ENCODE measurements at regions of chr5 and their contacts with region 1.

Region 1: DNA sequence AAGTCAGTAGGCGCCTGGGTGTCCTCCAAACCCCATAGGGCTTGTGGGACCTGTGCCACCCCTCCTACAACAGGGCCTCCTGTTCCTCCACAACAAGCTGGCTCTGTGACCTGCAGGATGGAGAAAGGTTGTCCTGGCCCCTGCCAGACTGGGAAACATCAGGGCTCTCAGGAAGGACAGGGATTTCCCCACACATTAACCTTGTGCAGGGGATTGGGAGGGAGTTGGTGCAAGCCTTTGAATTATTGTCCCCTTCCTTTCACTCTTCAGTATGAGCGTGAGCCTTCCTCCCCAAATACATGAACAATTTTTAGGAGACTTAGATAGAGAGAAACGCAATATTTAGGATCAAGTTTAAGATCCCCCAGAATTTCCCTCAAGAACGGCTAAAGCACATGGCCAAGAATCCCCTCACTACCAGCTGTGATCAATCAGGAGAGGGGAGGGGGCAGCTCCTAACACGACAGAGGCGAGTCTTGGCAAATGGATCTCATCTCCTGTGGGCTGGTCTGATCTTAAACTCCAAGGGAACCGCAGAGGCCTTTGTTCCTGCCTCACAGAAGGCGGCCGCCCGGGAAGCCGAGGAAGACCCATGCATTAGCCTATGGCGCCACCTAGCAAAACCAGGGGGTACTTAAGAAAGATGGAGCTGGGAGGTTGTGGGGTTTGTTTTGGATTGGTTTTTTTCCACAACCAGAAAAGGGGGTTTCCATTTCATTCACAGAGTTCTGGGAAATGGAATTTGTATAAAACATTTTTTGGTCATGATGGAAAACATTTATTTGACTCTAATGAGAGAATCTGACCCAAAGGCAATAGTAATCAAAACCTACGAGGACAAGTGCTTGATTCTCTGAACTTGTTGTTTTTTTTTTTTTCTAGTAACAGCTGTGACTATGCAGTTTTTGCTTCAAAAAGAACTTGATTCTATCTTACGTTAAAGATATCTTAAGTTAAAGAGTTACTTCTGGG is 36.1 kb upstream of the OSMR start:
- DNase-seq: peak; percentile 83 to 87 (median 86)
- ATAC-seq: peak; percentile 98
- H3K4me3 ChIP-seq: no peak overlapping the region
- H3K27ac ChIP-seq: no peak overlapping the region
- H3K4me1 ChIP-seq: peaks cover 2 to 7% of the 10 kb centered on the region in 2 experiments; a peak in 3 of 5 replicates
- H3K27me3 ChIP-seq: no peaks in the 10 kb centered on the region
- CTCF ChIP-seq: peak; percentile 94 to 98 (median 95)
- EP300 ChIP-seq: no peak
- POLR2A ChIP-seq: no peak
- RAD21 ChIP-seq: peak; percentile 97 to 98

Region 2: GRCh38 chr5:38208782-38209378 is 600.8 kb before region 1 on chr5:
- CTCF ChIA-PET with region 1: interaction called, 6 read pairs
- POLR2A ChIA-PET with region 1: no interaction called
- in situ Hi-C with region 1: no loop called
- intact Hi-C with region 1: loop called (anchors 1 kb)
- DNase-seq: peak; percentile 34 to 69 (median 41)
- ATAC-seq: peak; percentile 86
- H3K4me3 ChIP-seq: no peak overlapping the region
- H3K27ac ChIP-seq: no peak overlapping the region
- H3K4me1 ChIP-seq: no peaks in the 10 kb centered on the region
- H3K27me3 ChIP-seq: no peaks in the 10 kb centered on the region
- CTCF ChIP-seq: peak; percentile 64 to 83 (median 70)
- EP300 ChIP-seq: no peak
- POLR2A ChIP-seq: no peak
- RAD21 ChIP-seq: peak; percentile 72 to 81

Region 3: GRCh38 chr5:38382898-38383297 is 426.8 kb before region 1 on chr5:
- CTCF ChIA-PET with region 1: no interaction called
- POLR2A ChIA-PET with region 1: no interaction called
- in situ Hi-C with region 1: no loop called
- intact Hi-C with region 1: loop called (anchors 2 kb)
- DNase-seq: peak; percentile 79 to 88 (median 85)
- ATAC-seq: peak; percentile 94
- H3K4me3 ChIP-seq: no peak overlapping the region
- H3K27ac ChIP-seq: no peak overlapping the region
- H3K4me1 ChIP-seq: peaks cover 10 to 26% of the 10 kb centered on the region in 2 experiments
- H3K27me3 ChIP-seq: no peaks in the 10 kb centered on the region
- CTCF ChIP-seq: peak; percentile 82 to 96 (median 87)
- EP300 ChIP-seq: peak; percentile 52; the same call in 1 of the 2 replicates
- POLR2A ChIP-seq: no peak
- RAD21 ChIP-seq: peak; percentile 57 to 83

Region 4: DNA sequence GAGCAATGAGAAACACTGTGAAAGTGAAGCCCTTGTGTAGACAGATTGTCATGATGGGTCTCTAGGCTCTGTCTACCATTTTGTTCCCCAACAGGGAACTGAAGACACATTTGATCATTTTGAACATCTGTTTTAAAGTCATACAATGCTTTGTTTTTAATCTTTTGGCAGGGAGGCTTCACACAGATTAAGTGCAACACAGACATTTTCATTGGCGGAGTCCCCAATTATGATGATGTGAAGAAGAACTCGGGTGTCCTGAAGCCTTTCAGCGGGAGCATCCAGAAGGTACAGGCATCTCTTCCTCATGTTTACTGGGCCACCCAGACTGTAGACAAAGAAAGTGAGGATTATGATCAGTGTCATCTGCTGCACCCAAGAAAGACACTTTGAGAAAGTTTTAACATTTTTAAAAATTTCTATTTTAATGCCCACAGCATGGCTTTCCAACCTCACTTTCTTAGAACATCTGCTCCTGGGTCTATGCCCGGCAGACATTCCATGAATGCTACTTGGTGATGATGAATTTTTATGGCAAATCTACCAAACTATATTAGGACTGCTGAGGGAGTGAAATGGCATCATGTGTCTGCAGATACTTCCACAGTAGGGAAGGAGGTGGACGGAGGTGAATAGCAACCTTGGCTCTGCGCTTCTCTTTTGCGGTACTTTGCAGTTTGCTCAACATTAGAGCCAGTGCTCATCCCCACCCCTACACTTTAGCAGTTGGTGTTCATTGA is 374.5 kb before region 1 on chr5:
- CTCF ChIA-PET with region 1: no interaction called
- POLR2A ChIA-PET with region 1: no interaction called
- in situ Hi-C with region 1: loop called (anchors 5 kb)
- intact Hi-C with region 1: no loop called
- DNase-seq: no peak
- ATAC-seq: no peak
- H3K4me3 ChIP-seq: no peak overlapping the region
- H3K27ac ChIP-seq: no peak overlapping the region
- H3K4me1 ChIP-seq: no peaks in the 10 kb centered on the region
- H3K27me3 ChIP-seq: peaks cover 25 to 36% of the 10 kb centered on the region in 2 experiments
- CTCF ChIP-seq: no peak
- EP300 ChIP-seq: no peak
- POLR2A ChIP-seq: no peak
- RAD21 ChIP-seq: no peak

Region 5: GRCh38 chr5:38551030-38552017 is 258.4 kb before region 1 on chr5:
- CTCF ChIA-PET with region 1: no interaction called
- POLR2A ChIA-PET with region 1: no interaction called
- in situ Hi-C with region 1: no loop called
- intact Hi-C with region 1: loop called (anchors 2 kb)
- DNase-seq: peak; percentile 17 to 37 (median 22)
- ATAC-seq: peak; percentile 79
- H3K4me3 ChIP-seq: no peak overlapping the region
- H3K27ac ChIP-seq: no peak overlapping the region
- H3K4me1 ChIP-seq: peaks cover 0 to 6% of the 10 kb centered on the region in 2 experiments; a peak in 3 of 5 replicates
- H3K27me3 ChIP-seq: peaks cover 0 to 5% of the 10 kb centered on the region in 2 experiments; a peak in 2 of 5 replicates
- CTCF ChIP-seq: peak; percentile 65 to 68 (median 68)
- EP300 ChIP-seq: no peak
- POLR2A ChIP-seq: no peak
- RAD21 ChIP-seq: peak; percentile 49 to 69

Region 6: DNA sequence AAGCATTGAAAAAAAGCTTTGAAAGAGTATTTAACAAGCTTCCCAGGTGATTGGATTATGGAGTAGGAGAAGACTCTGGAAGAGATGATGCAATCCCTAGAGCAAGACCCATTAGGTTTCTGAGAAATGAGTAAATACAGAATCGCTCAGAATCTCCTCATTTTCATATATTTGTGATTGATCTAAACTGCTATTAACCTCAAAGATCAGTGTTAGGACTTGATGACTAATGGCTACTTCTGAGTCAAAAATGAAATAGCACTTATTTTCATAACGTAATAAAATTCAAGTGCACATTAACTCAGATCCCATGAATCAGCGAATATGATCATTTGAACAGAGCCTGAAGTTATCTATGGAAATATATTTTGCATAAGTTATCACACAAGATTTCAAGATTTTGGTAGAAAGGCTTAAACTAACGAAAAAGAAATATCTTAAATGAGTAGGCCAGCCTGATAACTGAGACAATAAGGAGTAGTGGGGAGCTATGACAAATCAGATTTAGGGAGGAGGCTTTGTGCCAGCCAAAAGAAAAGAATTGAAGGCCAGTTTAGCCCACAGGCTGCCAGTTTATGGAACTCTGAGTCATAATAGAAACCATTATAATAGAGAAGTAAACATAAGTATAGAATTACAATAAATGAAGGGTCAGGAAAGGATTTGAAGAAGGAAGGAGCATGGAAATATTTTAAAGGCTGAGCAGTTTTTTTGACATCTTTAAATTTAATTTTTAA is 70.5 kb before region 1 on chr5:
- CTCF ChIA-PET with region 1: no interaction called
- POLR2A ChIA-PET with region 1: no interaction called
- in situ Hi-C with region 1: no loop called
- intact Hi-C with region 1: loop called (anchors 5 kb)
- DNase-seq: no peak
- ATAC-seq: no peak
- H3K4me3 ChIP-seq: no peak overlapping the region
- H3K27ac ChIP-seq: no peak overlapping the region
- H3K4me1 ChIP-seq: no peaks in the 10 kb centered on the region; a peak in 1 of 5 replicates
- H3K27me3 ChIP-seq: no peaks in the 10 kb centered on the region
- CTCF ChIP-seq: no peak
- EP300 ChIP-seq: no peak
- POLR2A ChIP-seq: no peak
- RAD21 ChIP-seq: no peak

Region 7: GRCh38 chr5:38948501-38948900 is 138.8 kb after region 1 on chr5:
- CTCF ChIA-PET with region 1: no interaction called
- POLR2A ChIA-PET with region 1: no interaction called
- in situ Hi-C with region 1: no loop called
- intact Hi-C with region 1: no loop called
- DNase-seq: no peak
- ATAC-seq: no peak
- H3K4me3 ChIP-seq: no peak overlapping the region
- H3K27ac ChIP-seq: no peak overlapping the region
- H3K4me1 ChIP-seq: no peaks in the 10 kb centered on the region
- H3K27me3 ChIP-seq: no peaks in the 10 kb centered on the region
- CTCF ChIP-seq: no peak
- EP300 ChIP-seq: no peak
- POLR2A ChIP-seq: no peak
- RAD21 ChIP-seq: no peak

Measured in K562 (cell line).